Activated B cell treated with CpG ODN at 0.5 μM for 24 hours (primary cell): ENCODE measurements at regions of chr17 and their contacts with region 1.

Region 1: GRCh38 chr17:8156246-8156992 is 4.2 kb upstream of the PER1 start:
- DNase-seq: peak; percentile 98
- ATAC-seq: peak; percentile 82
- H3K4me3 Mint-ChIP-seq: no peak overlapping the region
- H3K27ac Mint-ChIP-seq: no peak overlapping the region
- H3K4me1 Mint-ChIP-seq: peaks cover 48% of the 10 kb centered on the region
- H3K27me3 Mint-ChIP-seq: no peaks in the 10 kb centered on the region
- CTCF ChIP-seq: no peak

Region 2: DNA sequence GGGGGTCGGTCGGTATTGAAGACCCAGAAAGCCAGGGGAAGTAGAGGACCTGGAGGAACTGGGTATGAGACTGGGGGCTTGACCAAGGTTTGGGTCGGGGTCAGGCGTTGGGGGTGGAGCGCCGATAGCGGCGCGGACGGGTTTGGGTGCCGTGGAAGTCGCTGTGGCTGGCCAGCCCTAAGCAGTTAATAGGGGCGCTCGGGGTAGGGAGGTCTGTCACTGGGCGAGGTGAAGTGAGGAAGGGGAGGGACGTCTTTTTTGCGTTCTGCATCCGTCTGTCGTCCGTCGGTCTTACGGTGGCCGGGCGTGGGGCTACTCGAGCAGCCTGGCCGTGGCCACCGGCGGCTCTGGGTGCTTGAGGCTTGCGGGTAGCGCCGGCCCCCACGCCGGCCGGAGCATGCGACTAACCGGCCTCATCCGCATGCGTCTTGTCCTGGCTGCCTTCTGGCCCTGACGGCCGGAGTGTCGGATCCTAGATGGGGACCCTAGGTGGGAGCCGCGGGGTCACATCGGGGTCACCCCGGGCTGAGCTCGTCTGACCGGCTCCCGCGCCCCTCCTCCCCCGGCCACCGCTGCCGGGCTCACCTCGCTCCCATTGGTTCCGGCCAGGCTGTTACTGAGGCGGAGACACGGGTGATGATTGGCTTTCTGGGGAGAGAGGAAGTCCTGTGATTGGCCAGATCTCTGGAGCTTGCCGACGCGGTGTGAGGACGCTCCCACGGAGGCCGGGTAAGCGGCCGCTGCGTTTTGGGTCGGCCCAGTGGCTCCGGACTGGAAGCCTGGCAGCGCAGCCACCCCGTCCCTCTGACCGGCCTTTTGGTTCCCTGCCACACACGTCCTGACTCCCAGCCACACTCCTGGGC is 311.9 kb before region 1 on chr17:
- CTCF ChIA-PET with region 1: no interaction called
- POLR2A ChIA-PET with region 1: interaction called, 4 read pairs
- intact Hi-C with region 1: loop called (anchors 2 kb)
- DNase-seq: peak; percentile 83
- ATAC-seq: peak; percentile 46
- H3K4me3 Mint-ChIP-seq: peak overlapping the region; percentile 98
- H3K27ac Mint-ChIP-seq: peak overlapping the region; percentile 100
- H3K4me1 Mint-ChIP-seq: peaks cover 50% of the 10 kb centered on the region
- H3K27me3 Mint-ChIP-seq: no peaks in the 10 kb centered on the region
- CTCF ChIP-seq: no peak

Region 3: GRCh38 chr17:7982666-7983065 is 173.8 kb before region 1 on chr17:
- CTCF ChIA-PET with region 1: no interaction called
- POLR2A ChIA-PET with region 1: no interaction called
- intact Hi-C with region 1: no loop called
- DNase-seq: no peak
- ATAC-seq: no peak
- H3K4me3 Mint-ChIP-seq: no peak overlapping the region
- H3K27ac Mint-ChIP-seq: no peak overlapping the region
- H3K4me1 Mint-ChIP-seq: no peaks in the 10 kb centered on the region
- H3K27me3 Mint-ChIP-seq: peaks cover 34% of the 10 kb centered on the region
- CTCF ChIP-seq: no peak

Region 4: GRCh38 chr17:8079291-8080207 is 76.9 kb before region 1 on chr17:
- CTCF ChIA-PET with region 1: interaction called, 5 read pairs
- POLR2A ChIA-PET with region 1: interaction called, 5 read pairs
- intact Hi-C with region 1: loop called (anchors 1 kb)
- DNase-seq: peak; percentile 82
- ATAC-seq: peak; percentile 85
- H3K4me3 Mint-ChIP-seq: peak overlapping the region; percentile 89
- H3K27ac Mint-ChIP-seq: peak overlapping the region; percentile 83
- H3K4me1 Mint-ChIP-seq: peaks cover 17% of the 10 kb centered on the region
- H3K27me3 Mint-ChIP-seq: peaks cover 13% of the 10 kb centered on the region
- CTCF ChIP-seq: no peak

Region 5: DNA sequence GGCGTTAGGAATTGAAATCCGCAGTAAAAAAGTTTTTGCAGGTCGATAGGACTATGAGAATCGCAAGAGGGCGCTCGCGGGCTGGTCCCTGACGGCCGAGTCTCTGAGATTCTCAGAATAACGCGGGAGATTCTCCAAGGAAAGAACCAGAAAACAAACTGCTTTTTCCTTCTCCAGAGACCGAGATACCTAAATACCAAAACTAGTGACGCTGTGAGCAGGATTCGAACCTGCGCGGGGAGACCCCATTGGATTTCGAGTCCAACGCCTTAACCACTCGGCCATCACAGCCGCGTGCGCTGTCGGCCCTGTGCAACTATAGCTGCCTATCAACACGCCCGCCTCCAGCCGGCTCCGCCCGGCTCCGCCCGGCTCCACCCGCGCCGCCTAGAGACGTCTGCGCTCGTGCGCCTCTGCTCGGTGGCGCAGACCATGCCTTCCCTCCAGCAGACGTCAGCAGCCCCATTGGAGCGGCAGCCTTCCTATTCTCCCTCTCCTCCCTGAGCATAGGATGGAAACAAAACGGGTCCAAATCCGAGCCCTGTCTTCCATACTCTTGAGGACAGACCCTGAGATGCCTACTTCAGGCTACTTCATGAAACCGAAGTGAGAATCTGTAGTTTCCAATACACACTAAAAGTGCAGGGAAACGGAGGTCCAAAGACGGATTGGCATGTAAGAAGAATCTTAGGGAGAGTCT is 17.6 kb before region 1 on chr17:
- CTCF ChIA-PET with region 1: interaction called, 9 read pairs
- POLR2A ChIA-PET with region 1: interaction called, 139 read pairs
- intact Hi-C with region 1: loop called (anchors 1 kb)
- DNase-seq: peak; percentile 94
- ATAC-seq: peak; percentile 94
- H3K4me3 Mint-ChIP-seq: no peak overlapping the region
- H3K27ac Mint-ChIP-seq: no peak overlapping the region
- H3K4me1 Mint-ChIP-seq: no peaks in the 10 kb centered on the region
- H3K27me3 Mint-ChIP-seq: no peaks in the 10 kb centered on the region
- CTCF ChIP-seq: peak; percentile 93

Region 6: DNA sequence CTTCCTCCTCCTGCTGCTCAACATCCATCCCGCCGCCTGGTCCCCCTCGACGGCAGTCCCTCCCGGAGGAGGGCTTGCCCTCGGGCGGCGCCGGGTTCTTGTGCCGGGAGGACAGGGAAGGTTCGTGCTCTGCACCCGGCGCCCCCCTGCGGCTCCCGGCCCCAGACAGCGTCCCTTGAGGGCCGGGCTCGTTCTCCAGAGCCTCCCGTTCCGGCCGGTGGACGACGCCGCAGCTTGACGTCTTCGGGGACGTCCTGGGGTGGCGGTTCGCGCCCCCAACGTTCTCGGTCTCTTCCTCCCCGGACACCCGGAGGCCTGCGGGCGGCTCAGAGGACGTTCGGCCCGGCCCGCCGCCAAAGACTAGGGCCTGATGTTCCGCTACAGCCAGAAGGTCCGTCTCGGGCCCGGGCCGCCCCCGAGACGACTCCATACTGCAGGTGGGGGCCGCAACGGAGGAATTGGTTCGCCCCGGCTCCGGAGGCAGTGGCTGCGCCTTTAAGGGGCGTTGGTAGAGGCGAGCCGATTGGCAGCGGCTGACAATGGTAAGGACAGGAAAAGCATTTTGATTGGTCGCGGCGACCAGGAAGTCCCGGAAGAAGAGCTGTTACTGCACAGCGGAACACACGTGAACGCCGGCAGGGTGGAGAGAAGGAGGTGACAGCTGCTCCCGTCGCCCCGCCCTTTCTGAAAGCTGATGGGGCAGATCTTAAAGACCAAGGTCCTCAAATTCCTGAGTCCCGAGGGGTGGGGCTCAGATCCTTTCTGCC is 33.5 kb after region 1 on chr17 and contains the start of gene BORCS6:
- CTCF ChIA-PET with region 1: interaction called, 4 read pairs
- POLR2A ChIA-PET with region 1: interaction called, 80 read pairs
- intact Hi-C with region 1: loop called (anchors 1 kb)
- DNase-seq: peak; percentile 84
- ATAC-seq: peak; percentile 67
- H3K4me3 Mint-ChIP-seq: no peak within 1 kb of the TSS
- H3K27ac Mint-ChIP-seq: peak within 1 kb of the TSS; percentile 95
- H3K4me1 Mint-ChIP-seq: peaks cover 11% of the 10 kb centered on the region
- H3K27me3 Mint-ChIP-seq: no peaks in the 10 kb centered on the region
- CTCF ChIP-seq: no peak
- total RNA-seq, gene BORCS6: 12.3 and 12.8 TPM in 2 replicates

Region 7: GRCh38 chr17:8294814-8295316 is 138.4 kb after region 1 on chr17:
- CTCF ChIA-PET with region 1: no interaction called
- POLR2A ChIA-PET with region 1: interaction called, 12 read pairs
- intact Hi-C with region 1: loop called (anchors 1 kb)
- DNase-seq: no peak
- ATAC-seq: no peak
- H3K4me3 Mint-ChIP-seq: peak overlapping the region; percentile 92
- H3K27ac Mint-ChIP-seq: peak overlapping the region; percentile 86
- H3K4me1 Mint-ChIP-seq: peaks cover 30% of the 10 kb centered on the region
- H3K27me3 Mint-ChIP-seq: no peaks in the 10 kb centered on the region
- CTCF ChIP-seq: no peak

Region 8: DNA sequence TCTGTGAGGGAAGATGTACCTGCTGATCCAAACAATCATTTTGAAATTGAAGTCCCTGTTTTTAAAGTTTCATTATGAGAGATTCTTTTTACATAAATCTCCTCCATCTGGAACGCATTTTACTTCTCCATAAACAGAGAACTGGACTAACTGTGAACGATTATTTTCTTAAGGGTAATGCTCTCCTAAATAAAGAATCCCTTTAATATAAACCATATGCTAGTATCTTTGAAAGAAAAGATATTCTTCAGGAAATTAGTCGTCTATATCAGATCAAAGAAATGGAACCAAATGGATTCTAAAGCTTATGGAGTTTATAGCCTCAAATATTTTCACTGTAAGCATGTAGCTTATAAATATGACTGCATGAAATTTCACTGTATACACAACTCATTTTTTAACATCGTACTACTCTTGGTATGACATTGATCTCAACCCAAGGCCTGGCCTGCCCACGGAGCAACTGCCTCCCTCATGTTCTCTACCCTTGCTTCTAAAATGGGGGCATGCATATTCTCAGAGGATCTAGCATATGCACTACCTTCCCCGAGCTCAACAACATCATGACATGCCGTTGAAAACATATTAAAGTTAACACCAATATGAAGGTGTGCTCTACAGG is 407.7 kb after region 1 on chr17:
- CTCF ChIA-PET with region 1: no interaction called
- POLR2A ChIA-PET with region 1: no interaction called
- intact Hi-C with region 1: no loop called
- DNase-seq: no peak
- ATAC-seq: no peak
- H3K4me3 Mint-ChIP-seq: no peak overlapping the region
- H3K27ac Mint-ChIP-seq: no peak overlapping the region
- H3K4me1 Mint-ChIP-seq: no peaks in the 10 kb centered on the region
- H3K27me3 Mint-ChIP-seq: peaks cover 3% of the 10 kb centered on the region
- CTCF ChIP-seq: no peak